CD8-positive, alpha-beta T cell (primary cell): ENCODE measurements at regions of chr3 and their contacts with region 1.

Region 1: DNA sequence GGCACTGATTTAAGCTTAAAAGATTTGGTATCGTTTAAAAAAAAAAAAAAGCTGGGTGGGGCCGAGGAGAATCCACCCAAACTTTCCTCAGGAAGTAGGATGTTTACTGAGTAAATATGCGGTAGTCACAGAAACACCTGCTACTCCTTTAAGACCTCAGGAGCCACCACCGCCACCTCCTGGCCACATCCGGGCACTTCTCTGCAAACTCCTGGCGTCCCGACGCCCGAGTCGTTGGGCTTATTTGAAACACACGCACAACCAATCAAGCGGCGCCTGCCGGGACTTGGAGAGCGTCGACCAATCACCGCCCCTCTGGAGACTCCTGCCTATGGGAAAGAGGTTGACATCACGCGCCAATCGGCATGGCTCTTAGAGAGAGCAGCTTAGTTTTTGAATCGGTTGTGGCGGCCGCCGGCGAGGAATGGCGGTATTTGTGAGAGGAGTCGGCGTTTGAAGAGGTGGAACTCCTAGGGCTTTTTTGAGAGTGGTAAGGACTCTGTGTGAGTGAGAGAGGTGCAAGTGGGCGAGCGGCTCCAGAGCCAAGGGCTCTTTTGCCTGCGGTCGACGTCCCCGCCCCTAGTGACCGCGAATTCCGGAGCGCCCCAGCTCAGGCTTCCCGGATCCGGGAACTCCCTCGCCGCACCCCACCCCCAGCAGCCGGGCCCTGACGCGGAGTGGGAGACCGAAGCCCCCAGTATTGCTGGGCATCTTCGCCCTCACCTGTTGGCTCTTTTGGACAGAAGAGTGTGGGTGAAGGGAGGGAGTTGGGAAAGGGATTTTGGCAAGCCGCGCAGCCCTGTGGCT is at the start of gene ECT2:
- DNase-seq: peak; percentile 92 to 99 (median 96)
- ATAC-seq: peak; percentile 98
- H3K4me3 ChIP-seq: peak within 1 kb of the TSS; percentile 90 to 96
- H3K4me3 Mint-ChIP-seq: peak within 1 kb of the TSS; percentile 98
- H3K27ac ChIP-seq: peak within 1 kb of the TSS; percentile 66 to 69
- H3K27ac Mint-ChIP-seq: peak within 1 kb of the TSS; percentile 62
- H3K4me1 ChIP-seq: peaks cover 12% of the 10 kb centered on the region
- H3K4me1 Mint-ChIP-seq: peaks cover 15% of the 10 kb centered on the region
- H3K27me3 ChIP-seq: no peaks in the 10 kb centered on the region
- H3K27me3 Mint-ChIP-seq: no peaks in the 10 kb centered on the region
- CTCF ChIP-seq: peak; percentile 72
- total RNA-seq, gene ECT2: 1.3 to 1.5 TPM

Region 2: DNA sequence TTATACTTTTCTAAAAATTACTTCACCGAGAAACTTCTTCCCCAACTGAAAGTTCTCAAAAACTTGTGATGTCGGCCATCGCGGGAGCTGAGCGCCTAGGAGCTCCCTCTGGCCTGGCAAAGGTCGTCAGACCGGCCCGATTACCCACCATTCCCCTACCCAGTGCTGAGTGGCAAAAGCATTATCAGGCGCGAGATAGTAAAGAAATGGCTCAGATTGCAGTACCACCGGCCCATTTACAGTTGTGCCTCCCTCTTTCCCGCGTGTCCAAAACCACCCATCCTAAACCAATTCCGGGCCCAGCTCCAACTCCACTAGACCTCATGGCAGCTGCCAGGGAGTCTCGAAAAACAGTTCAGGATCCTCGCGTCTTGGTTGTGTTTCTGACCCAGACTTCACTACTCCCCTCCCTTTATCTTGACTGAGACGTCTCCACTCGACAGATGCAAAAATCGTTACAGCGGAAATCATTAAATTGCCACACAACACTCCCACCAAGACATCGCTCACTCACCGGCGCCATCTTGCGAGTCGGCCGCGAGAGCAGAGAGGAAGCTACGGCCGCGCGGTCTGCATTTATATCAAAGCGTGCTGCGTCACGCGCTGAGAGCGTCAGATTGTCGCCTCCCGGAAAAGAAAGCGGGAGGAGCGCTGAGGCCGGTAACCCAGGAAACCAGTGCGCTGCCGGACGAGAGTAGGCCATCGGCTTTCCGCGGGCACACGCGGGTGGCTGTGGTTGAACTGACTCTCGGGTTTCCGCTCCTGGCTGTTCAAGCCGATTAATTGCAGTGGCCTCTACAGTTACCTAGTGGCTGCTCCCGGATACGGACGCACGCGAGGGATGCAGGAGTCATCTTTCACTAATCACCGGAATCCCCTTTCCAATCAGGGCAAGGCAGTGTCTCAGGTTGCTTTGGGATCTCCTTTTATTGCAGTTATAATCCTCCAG is 1880.7 kb before region 1 on chr3 and contains the start of gene RPL22L1:
- CTCF ChIA-PET with region 1: no interaction called
- POLR2A ChIA-PET with region 1: no interaction called
- intact Hi-C with region 1: loop called (anchors 5 kb)
- DNase-seq: peak; percentile 85 to 97 (median 93)
- ATAC-seq: peak; percentile 93
- H3K4me3 ChIP-seq: peak within 1 kb of the TSS; percentile 73 to 77
- H3K4me3 Mint-ChIP-seq: peak within 1 kb of the TSS; percentile 94
- H3K27ac ChIP-seq: peak within 1 kb of the TSS; percentile 84 to 94
- H3K27ac Mint-ChIP-seq: peak within 1 kb of the TSS; percentile 97
- H3K4me1 ChIP-seq: peaks cover 27% of the 10 kb centered on the region
- H3K4me1 Mint-ChIP-seq: peaks cover 28% of the 10 kb centered on the region
- H3K27me3 ChIP-seq: no peaks in the 10 kb centered on the region
- H3K27me3 Mint-ChIP-seq: no peaks in the 10 kb centered on the region
- CTCF ChIP-seq: no peak
- total RNA-seq, gene RPL22L1: 54.3 to 56.8 TPM

Region 3: GRCh38 chr3:172106989-172107388 is 643.6 kb before region 1 on chr3:
- CTCF ChIA-PET with region 1: no interaction called
- POLR2A ChIA-PET with region 1: no interaction called
- intact Hi-C with region 1: loop called in 1 of 2 experiments (anchors 10 kb)
- DNase-seq: peak; percentile 35 to 93 (median 59)
- ATAC-seq: peak; percentile 56
- H3K4me3 ChIP-seq: peak overlapping the region; percentile 25 to 28
- H3K4me3 Mint-ChIP-seq: peak overlapping the region; percentile 70
- H3K27ac ChIP-seq: peak overlapping the region; percentile 41 to 72
- H3K27ac Mint-ChIP-seq: peak overlapping the region; percentile 85
- H3K4me1 ChIP-seq: peaks cover 74% of the 10 kb centered on the region
- H3K4me1 Mint-ChIP-seq: peaks cover 81% of the 10 kb centered on the region
- H3K27me3 ChIP-seq: no peaks in the 10 kb centered on the region
- H3K27me3 Mint-ChIP-seq: no peaks in the 10 kb centered on the region
- CTCF ChIP-seq: no peak

Region 4: GRCh38 chr3:172522871-172523818 is 227.4 kb before region 1 on chr3 and contains the start of gene TNFSF10:
- CTCF ChIA-PET with region 1: no interaction called
- POLR2A ChIA-PET with region 1: no interaction called
- intact Hi-C with region 1: loop called in 1 of 2 experiments (anchors 2 kb)
- DNase-seq: peak; percentile 15 to 81 (median 51)
- ATAC-seq: peak; percentile 76
- H3K4me3 ChIP-seq: peak within 1 kb of the TSS; percentile 70 to 76
- H3K4me3 Mint-ChIP-seq: peak within 1 kb of the TSS; percentile 96
- H3K27ac ChIP-seq: peak within 1 kb of the TSS; percentile 66 to 87
- H3K27ac Mint-ChIP-seq: peak within 1 kb of the TSS; percentile 98
- H3K4me1 ChIP-seq: peaks cover 26% of the 10 kb centered on the region
- H3K4me1 Mint-ChIP-seq: peaks cover 53% of the 10 kb centered on the region
- H3K27me3 ChIP-seq: no peaks in the 10 kb centered on the region
- H3K27me3 Mint-ChIP-seq: no peaks in the 10 kb centered on the region
- CTCF ChIP-seq: no peak
- total RNA-seq, gene TNFSF10: 3.6 to 4.1 TPM

Region 5: DNA sequence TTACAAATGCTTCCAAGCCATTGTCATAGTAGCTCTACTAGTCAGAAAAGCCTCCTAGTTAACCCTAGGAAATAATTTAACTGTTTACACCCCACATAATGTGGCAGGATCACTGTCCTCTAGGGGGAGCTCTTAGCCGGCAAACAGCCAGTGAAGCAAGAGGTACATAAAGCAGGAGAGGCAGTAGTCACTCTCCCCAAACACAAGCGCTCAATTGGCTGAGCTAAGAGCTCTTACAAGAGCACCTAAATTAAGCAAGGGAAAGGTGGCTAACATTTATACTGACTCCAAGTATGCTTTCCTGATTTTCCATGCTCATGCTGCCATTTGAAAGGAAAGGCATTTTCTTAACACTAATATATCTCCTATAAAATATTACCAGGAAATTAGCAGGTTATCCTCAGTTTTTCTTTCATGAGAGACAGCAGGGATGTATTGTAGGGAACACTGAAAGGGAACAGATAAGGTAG is 77.3 kb before region 1 on chr3:
- CTCF ChIA-PET with region 1: interaction called, 3 read pairs
- POLR2A ChIA-PET with region 1: interaction called, 3 read pairs
- intact Hi-C with region 1: loop called in 1 of 2 experiments (anchors 10 kb)
- DNase-seq: peak in 7 of 9 experiments; percentile 4 to 60 (median 41)
- ATAC-seq: no peak
- H3K4me3 ChIP-seq: no peak overlapping the region
- H3K4me3 Mint-ChIP-seq: no peak overlapping the region
- H3K27ac ChIP-seq: no peak overlapping the region
- H3K27ac Mint-ChIP-seq: no peak overlapping the region
- H3K4me1 ChIP-seq: no peaks in the 10 kb centered on the region
- H3K4me1 Mint-ChIP-seq: peaks cover 2% of the 10 kb centered on the region
- H3K27me3 ChIP-seq: no peaks in the 10 kb centered on the region
- H3K27me3 Mint-ChIP-seq: no peaks in the 10 kb centered on the region
- CTCF ChIP-seq: peak; percentile 39

Region 6: GRCh38 chr3:172710664-172711453 is 39.7 kb before region 1 on chr3 and contains the start of gene NCEH1:
- CTCF ChIA-PET with region 1: interaction called, 3 read pairs
- POLR2A ChIA-PET with region 1: interaction called, 4 read pairs
- intact Hi-C with region 1: loop called (anchors 1 to 2 kb)
- DNase-seq: peak; percentile 41 to 88 (median 68)
- ATAC-seq: peak; percentile 96
- H3K4me3 ChIP-seq: peak within 1 kb of the TSS; percentile 82 to 93
- H3K4me3 Mint-ChIP-seq: peak within 1 kb of the TSS; percentile 96
- H3K27ac ChIP-seq: peak within 1 kb of the TSS; percentile 18 to 43
- H3K27ac Mint-ChIP-seq: peak within 1 kb of the TSS; percentile 63
- H3K4me1 ChIP-seq: peaks cover 5% of the 10 kb centered on the region
- H3K4me1 Mint-ChIP-seq: peaks cover 27% of the 10 kb centered on the region
- H3K27me3 ChIP-seq: peaks cover 0 to 2% of the 10 kb centered on the region in 2 experiments
- H3K27me3 Mint-ChIP-seq: no peaks in the 10 kb centered on the region
- CTCF ChIP-seq: no peak
- total RNA-seq, gene NCEH1: 0.72 to 0.87 TPM

Region 7: GRCh38 chr3:172808969-172809546 is 58.5 kb after region 1 on chr3:
- CTCF ChIA-PET with region 1: no interaction called
- POLR2A ChIA-PET with region 1: no interaction called
- intact Hi-C with region 1: no loop called
- DNase-seq: peak in 2 of 9 experiments; percentile 22 to 43
- ATAC-seq: no peak
- H3K4me3 ChIP-seq: no peak overlapping the region
- H3K4me3 Mint-ChIP-seq: no peak overlapping the region
- H3K27ac ChIP-seq: no peak overlapping the region
- H3K27ac Mint-ChIP-seq: no peak overlapping the region
- H3K4me1 ChIP-seq: no peaks in the 10 kb centered on the region
- H3K4me1 Mint-ChIP-seq: no peaks in the 10 kb centered on the region
- H3K27me3 ChIP-seq: no peaks in the 10 kb centered on the region
- H3K27me3 Mint-ChIP-seq: no peaks in the 10 kb centered on the region
- CTCF ChIP-seq: peak; percentile 36

Region 8: DNA sequence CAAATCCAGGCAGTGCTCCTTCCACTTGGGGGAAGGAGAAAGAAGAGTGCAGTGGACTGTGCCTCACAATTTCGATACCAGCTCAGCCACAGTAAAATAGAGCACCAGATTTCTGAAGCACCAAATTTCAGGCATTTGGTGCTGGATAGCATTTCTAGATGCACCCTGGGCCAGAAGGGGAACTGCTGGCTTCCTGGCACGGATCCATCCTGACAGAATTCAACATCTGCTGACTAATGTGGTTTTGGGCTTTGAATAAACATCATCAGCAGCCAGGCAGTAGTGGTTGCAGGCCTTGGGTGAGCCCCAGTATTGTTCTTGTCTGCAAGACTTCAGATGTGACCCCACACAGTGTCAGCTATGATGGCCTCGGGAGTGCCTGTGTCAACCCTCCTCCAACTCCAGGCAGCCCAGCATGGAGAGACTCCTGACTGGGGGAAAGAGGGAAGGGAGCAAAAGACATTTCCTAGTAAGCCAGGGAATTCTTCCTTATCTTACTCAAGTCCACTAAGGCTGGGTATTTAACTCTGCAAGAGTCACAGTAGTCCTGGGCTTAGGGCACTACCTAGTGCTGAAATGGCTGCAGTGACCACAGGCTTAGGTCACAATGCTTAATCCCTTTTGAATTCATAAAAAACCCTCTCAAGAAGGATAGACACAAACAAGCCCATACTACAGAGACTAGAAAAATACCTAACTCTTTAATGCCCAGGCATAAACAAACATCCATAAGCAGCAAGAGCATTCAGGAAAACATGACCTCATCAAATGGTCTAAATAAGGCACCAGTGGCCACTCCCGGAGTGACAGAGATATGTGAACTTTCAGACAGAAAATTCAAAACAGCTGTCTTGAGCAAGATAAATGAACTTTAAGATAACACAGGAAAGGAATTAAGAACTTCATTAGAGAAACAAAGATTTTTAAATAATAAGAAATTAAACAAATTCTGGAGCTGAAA is 315.8 kb after region 1 on chr3:
- CTCF ChIA-PET with region 1: no interaction called
- POLR2A ChIA-PET with region 1: no interaction called
- intact Hi-C with region 1: no loop called
- DNase-seq: no peak
- ATAC-seq: no peak
- H3K4me3 ChIP-seq: no peak overlapping the region
- H3K4me3 Mint-ChIP-seq: no peak overlapping the region
- H3K27ac ChIP-seq: no peak overlapping the region
- H3K27ac Mint-ChIP-seq: no peak overlapping the region
- H3K4me1 ChIP-seq: no peaks in the 10 kb centered on the region
- H3K4me1 Mint-ChIP-seq: no peaks in the 10 kb centered on the region
- H3K27me3 ChIP-seq: no peaks in the 10 kb centered on the region
- H3K27me3 Mint-ChIP-seq: no peaks in the 10 kb centered on the region
- CTCF ChIP-seq: no peak